Heart left ventricle (tissue), 16 donors: ENCODE measurements at regions of chr17 and their contacts with region 1.

Region 1: DNA sequence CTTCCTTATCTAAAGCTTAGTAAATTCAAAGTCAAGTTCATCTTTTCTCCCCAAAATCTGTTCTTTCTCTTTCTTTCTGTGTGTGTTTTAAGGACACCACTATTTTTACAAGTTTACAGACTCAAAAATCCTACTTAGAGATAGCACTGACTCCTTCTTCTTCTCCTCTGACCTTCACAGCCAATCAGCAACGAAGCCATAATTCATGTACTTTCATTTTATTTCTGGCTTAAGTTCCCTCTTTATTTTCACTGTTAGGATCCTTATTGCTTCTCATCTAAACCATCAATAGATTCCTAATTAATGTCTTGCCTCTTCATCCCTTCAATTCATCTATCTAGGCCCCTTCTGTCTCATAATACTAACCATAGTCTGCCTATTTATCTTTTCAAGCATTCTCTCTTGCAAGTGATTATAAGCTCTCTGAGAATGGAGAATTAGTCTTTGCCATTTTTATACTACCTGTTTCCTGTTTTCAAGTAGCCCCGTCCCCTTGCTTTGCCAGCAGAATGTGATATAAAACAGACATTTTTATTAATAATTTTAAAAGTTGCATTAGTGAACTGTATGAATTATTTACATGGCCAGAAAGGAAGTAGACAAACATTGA is 27.0 kb downstream of the CDC27 start:
- DNase-seq: no peak
- ATAC-seq: no peak
- H3K4me3 ChIP-seq: peak overlapping the region in 1 of 12 donors; percentile 6
- H3K27ac ChIP-seq: peak overlapping the region in 1 of 12 donors; percentile 38
- H3K4me1 ChIP-seq: peaks cover 0 to 34% (median 17%) of the 10 kb centered on the region in 12 donors
- H3K27me3 ChIP-seq: no peaks in the 10 kb centered on the region
- CTCF ChIP-seq: no peak
- POLR2A ChIP-seq: no peak

Region 2: GRCh38 chr17:47099987-47100711 is 62.0 kb before region 1 on chr17:
- intact Hi-C with region 1: loop called in 1 of 10 experiments (anchors 10 kb)
- DNase-seq: peak; percentile 92 to 96 (median 94)
- ATAC-seq: peak; percentile 99 to 100 (median 100)
- H3K4me3 ChIP-seq: peak overlapping the region; percentile 72 to 99 (median 93)
- H3K27ac ChIP-seq: peak overlapping the region; percentile 53 to 86 (median 74)
- H3K4me1 ChIP-seq: peaks cover 0 to 17% (median 9%) of the 10 kb centered on the region in 12 donors
- H3K27me3 ChIP-seq: no peaks in the 10 kb centered on the region
- CTCF ChIP-seq: peak in 2 of 12 donors; percentile 19 to 20
- POLR2A ChIP-seq: peak in 1 of 2 donors; percentile 75

Region 3: DNA sequence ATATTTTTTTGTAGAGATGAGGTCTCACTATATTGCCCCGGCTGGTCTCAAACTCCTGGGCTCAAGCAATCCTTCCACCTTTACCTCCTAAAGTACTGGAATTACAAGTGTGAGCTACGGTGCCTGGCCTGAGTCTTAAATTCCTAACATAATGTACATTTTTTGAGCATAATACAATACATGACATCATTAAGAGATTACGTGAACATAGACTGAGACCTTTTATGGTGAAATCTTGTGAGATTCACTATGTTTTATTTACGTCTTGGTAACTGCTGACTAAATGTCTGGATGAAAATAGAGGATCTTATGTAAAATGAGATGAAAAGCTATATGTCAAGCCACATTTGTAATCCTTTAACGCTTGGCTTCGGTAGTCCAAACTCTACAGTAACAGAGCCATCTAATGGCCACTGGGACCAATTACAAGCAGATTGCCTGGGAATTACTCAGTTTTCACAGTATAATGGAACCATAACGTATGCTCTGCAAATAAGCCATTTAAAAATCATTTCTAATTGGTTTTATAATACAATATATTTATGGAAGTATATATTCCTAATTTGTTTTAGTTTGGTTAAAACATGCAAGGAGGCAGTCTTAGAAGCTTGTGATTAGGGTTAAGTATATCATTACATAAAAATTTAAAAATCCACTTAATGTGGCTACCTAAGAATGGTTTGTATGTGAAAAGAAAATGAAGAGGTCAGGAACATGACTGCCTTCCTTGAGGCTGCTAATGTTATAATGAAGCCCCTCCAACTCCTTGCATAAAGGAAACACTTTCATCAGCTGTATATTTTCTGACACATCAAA is 153.5 kb after region 1 on chr17:
- intact Hi-C with region 1: loop called in 1 of 10 experiments (anchors 10 kb)
- DNase-seq: peak in 2 of 5 donors; percentile 31 to 37
- ATAC-seq: peak; percentile 65 to 84 (median 80)
- H3K4me3 ChIP-seq: no peak overlapping the region
- H3K27ac ChIP-seq: peak overlapping the region in 3 of 12 donors; percentile 31 to 66 (median 64)
- H3K4me1 ChIP-seq: peaks cover 0 to 15% (median 2%) of the 10 kb centered on the region in 12 donors
- H3K27me3 ChIP-seq: no peaks in the 10 kb centered on the region
- CTCF ChIP-seq: peak; percentile 70 to 93 (median 86)
- POLR2A ChIP-seq: no peak